Activated T-helper 1 cell treated with anti-CD3 and anti-CD28 coated beads, Interleukin-12 subunit alpha, Interleukin-12 subunit beta, Interleukin-2, Interleukin-4 antibody, amounts not matched to agents 30 ng/mL and 10 ng/mL and 1 ng/mL, durations not matched to agents 14 hours and 24 hours and 36 hours (primary cell): ENCODE measurements at regions of chr9 and their contacts with region 1.

Region 1: GRCh38 chr9:9603345-9603744 is 1009.5 kb downstream of the PTPRD start:
- DNase-seq: no peak
- H3K4me3 Mint-ChIP-seq: no peak overlapping the region
- H3K27ac Mint-ChIP-seq: no peak overlapping the region
- H3K4me1 Mint-ChIP-seq: no peaks in the 10 kb centered on the region
- H3K27me3 Mint-ChIP-seq: no peaks in the 10 kb centered on the region

Region 2: GRCh38 chr9:9557804-9558334 is 45.5 kb before region 1 on chr9:
- intact Hi-C with region 1: no loop called
- DNase-seq: no peak
- H3K4me3 Mint-ChIP-seq: no peak overlapping the region
- H3K27ac Mint-ChIP-seq: no peak overlapping the region
- H3K4me1 Mint-ChIP-seq: no peaks in the 10 kb centered on the region
- H3K27me3 Mint-ChIP-seq: no peaks in the 10 kb centered on the region

Region 3: GRCh38 chr9:9790216-9790872 is 187.0 kb after region 1 on chr9:
- intact Hi-C with region 1: loop called (anchors 10 kb)
- DNase-seq: no peak
- H3K4me3 Mint-ChIP-seq: no peak overlapping the region
- H3K27ac Mint-ChIP-seq: no peak overlapping the region
- H3K4me1 Mint-ChIP-seq: no peaks in the 10 kb centered on the region
- H3K27me3 Mint-ChIP-seq: no peaks in the 10 kb centered on the region

Region 4: DNA sequence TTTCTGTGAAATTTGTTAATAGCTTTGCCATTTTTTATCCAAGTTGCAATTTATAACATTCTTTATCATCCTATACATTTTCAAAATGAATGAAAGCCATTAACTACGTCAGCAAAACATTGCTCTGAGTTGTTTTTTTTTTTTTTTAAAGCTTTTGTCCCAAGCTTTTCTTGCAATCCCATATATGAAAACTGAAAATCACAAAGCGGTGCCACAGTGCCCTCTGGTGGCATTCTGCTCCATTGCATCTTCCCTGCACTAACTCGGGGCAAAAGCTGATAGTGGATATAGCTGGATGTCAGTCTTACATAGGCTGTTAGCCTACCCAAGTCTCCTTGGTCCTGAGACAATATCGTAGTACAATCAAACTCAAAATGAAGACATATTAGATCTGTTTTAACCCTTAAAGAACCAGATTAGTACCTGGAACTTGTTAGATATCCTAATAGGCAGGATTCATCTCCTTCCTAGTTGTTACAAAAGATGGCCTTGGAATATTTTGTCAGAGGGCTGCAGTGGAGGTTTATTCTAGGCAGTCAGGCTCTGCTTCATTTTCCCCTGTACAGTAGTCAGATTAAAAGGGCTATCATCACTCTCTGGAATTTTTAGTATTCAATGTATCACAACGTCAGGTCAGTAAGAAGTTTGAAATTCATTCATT is 339.5 kb after region 1 on chr9:
- intact Hi-C with region 1: loop called (anchors 2 kb)
- DNase-seq: peak; percentile 14
- H3K4me3 Mint-ChIP-seq: no peak overlapping the region
- H3K27ac Mint-ChIP-seq: no peak overlapping the region
- H3K4me1 Mint-ChIP-seq: no peaks in the 10 kb centered on the region
- H3K27me3 Mint-ChIP-seq: no peaks in the 10 kb centered on the region